CD4-positive, alpha-beta memory T cell (primary cell): ENCODE measurements at regions of chr16 and their contacts with region 1.

Region 1: GRCh38 chr16:27052007-27052406 is 14.7 kb upstream of the C16orf82 start:
- DNase-seq: no peak
- H3K4me3 ChIP-seq: no peak overlapping the region
- H3K4me3 Mint-ChIP-seq: no peak overlapping the region
- H3K27ac ChIP-seq: no peak overlapping the region
- H3K27ac Mint-ChIP-seq: no peak overlapping the region
- H3K4me1 ChIP-seq: no peaks in the 10 kb centered on the region
- H3K4me1 Mint-ChIP-seq: no peaks in the 10 kb centered on the region
- H3K27me3 ChIP-seq: no peaks in the 10 kb centered on the region
- H3K27me3 Mint-ChIP-seq: peaks cover 0 to 4% of the 10 kb centered on the region in 2 donors

Region 2: GRCh38 chr16:26913851-26914250 is 138.2 kb before region 1 on chr16:
- CTCF ChIA-PET with region 1: no interaction called
- POLR2A ChIA-PET with region 1: no interaction called
- intact Hi-C with region 1: no loop called
- DNase-seq: no peak
- H3K4me3 ChIP-seq: no peak overlapping the region
- H3K4me3 Mint-ChIP-seq: no peak overlapping the region
- H3K27ac ChIP-seq: no peak overlapping the region
- H3K27ac Mint-ChIP-seq: peak overlapping the region in 1 of 7 donors; percentile 14
- H3K4me1 ChIP-seq: no peaks in the 10 kb centered on the region
- H3K4me1 Mint-ChIP-seq: no peaks in the 10 kb centered on the region
- H3K27me3 ChIP-seq: no peaks in the 10 kb centered on the region
- H3K27me3 Mint-ChIP-seq: peaks cover 9 to 13% of the 10 kb centered on the region in 2 donors

Region 3: DNA sequence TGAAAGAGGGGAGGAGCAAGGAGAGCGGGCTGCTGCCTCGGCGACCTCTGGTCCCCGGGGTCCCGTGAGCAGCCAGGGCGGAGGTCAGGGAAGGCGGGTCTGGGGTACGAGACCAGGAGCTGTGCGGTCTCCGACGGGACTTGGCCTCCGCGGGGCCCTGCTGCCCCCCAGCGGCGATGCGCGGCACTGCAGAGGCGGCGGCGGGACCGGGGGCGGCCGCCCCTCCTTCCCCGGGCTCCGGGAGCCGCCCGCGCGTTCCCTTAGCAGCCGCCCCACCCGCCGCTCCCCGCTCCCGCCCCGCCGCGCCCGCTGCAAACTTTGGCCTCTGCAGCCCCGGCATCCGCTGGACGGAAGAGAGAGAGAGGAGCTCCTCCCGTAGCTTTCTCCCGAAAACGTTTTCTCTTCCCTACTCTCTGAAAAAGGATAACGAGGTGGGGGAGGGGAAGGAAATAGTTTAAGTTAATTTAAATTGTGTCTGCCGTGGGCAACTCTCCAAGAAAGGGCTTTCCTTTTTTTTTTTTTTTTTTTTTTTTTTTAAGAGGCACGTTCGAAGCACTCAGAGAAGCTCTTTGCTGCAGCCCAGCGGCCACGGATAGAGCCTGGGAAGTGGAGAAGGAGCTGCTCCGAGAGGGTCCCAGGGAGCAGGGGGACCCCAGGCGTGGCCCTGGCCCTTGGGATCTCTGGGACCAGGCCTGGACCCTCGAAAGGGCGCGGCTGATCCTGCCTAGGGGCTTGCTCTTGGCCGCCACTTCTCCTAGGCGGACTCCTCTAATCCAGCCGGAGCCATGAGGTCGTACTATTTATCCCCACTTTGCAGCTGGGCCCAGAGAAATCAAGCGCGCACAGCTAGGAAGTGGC is 57.9 kb after region 1 on chr16:
- CTCF ChIA-PET with region 1: no interaction called
- POLR2A ChIA-PET with region 1: no interaction called
- intact Hi-C with region 1: loop called (anchors 10 kb)
- DNase-seq: peak; percentile 64 to 78 (median 72)
- H3K4me3 ChIP-seq: no peak overlapping the region
- H3K4me3 Mint-ChIP-seq: peak overlapping the region in 7 of 8 donors; percentile 31 to 79 (median 72)
- H3K27ac ChIP-seq: no peak overlapping the region
- H3K27ac Mint-ChIP-seq: peak overlapping the region in 6 of 7 donors; percentile 9 to 65 (median 54)
- H3K4me1 ChIP-seq: peaks cover 7% of the 10 kb centered on the region
- H3K4me1 Mint-ChIP-seq: peaks cover 2 to 11% (median 6%) of the 10 kb centered on the region in 4 donors
- H3K27me3 ChIP-seq: no peaks in the 10 kb centered on the region
- H3K27me3 Mint-ChIP-seq: peaks cover under 1 to 1% of the 10 kb centered on the region in 2 donors